Tibial artery (tissue), 4 donors: ENCODE measurements at regions of chr5 and their contacts with region 1.

Region 1: GRCh38 chr5:173144200-173145176 is at the start of gene BNIP1:
- DNase-seq: peak; percentile 89 to 95
- H3K4me3 ChIP-seq: peak within 1 kb of the TSS; percentile 69 to 84
- H3K27ac ChIP-seq: peak within 1 kb of the TSS; percentile 69 to 82
- H3K4me1 ChIP-seq: peaks cover 0 to 10% (median 0%) of the 10 kb centered on the region in 4 donors
- H3K27me3 ChIP-seq: no peaks in the 10 kb centered on the region
- CTCF ChIP-seq: peak; percentile 87 to 89

Region 2: GRCh38 chr5:172707285-172708182 is 437.0 kb before region 1 on chr5:
- intact Hi-C with region 1: loop called (anchors 10 kb)
- DNase-seq: no peak
- H3K4me3 ChIP-seq: no peak overlapping the region
- H3K27ac ChIP-seq: no peak overlapping the region
- H3K4me1 ChIP-seq: no peaks in the 10 kb centered on the region
- H3K27me3 ChIP-seq: peaks cover 0 to 21% of the 10 kb centered on the region in 2 donors
- CTCF ChIP-seq: peak in 1 of 2 experiments; percentile 29